ENCODE measurements at regions of chr14 and their contacts with region 1.

Region 1: GRCh38 chr14:75487155-75487671 is 35.1 kb upstream of the BATF start:
- DNase-seq: peak in 3 of 9 experiments; percentile 45 to 64 (median 47)
- ATAC-seq: peak; percentile 70
- H3K4me3 ChIP-seq: no peak overlapping the region
- H3K4me3 Mint-ChIP-seq: no peak overlapping the region
- H3K27ac ChIP-seq: no peak overlapping the region
- H3K27ac Mint-ChIP-seq: peak overlapping the region; percentile 15
- H3K4me1 ChIP-seq: peaks cover 4% of the 10 kb centered on the region
- H3K4me1 Mint-ChIP-seq: peaks cover 11% of the 10 kb centered on the region
- H3K27me3 ChIP-seq: no peaks in the 10 kb centered on the region
- H3K27me3 Mint-ChIP-seq: no peaks in the 10 kb centered on the region
- CTCF ChIP-seq: no peak

Region 2: GRCh38 chr14:75132382-75133086 is 354.7 kb before region 1 on chr14:
- CTCF ChIA-PET with region 1: interaction called, 9 read pairs
- POLR2A ChIA-PET with region 1: no interaction called
- intact Hi-C with region 1: loop called (anchors 1 to 2 kb)
- DNase-seq: peak in 6 of 9 experiments; percentile 28 to 86 (median 54)
- ATAC-seq: peak; percentile 91
- H3K4me3 ChIP-seq: no peak overlapping the region
- H3K4me3 Mint-ChIP-seq: no peak overlapping the region
- H3K27ac ChIP-seq: no peak overlapping the region
- H3K27ac Mint-ChIP-seq: peak overlapping the region; percentile 12
- H3K4me1 ChIP-seq: peaks cover 3% of the 10 kb centered on the region
- H3K4me1 Mint-ChIP-seq: peaks cover 18% of the 10 kb centered on the region
- H3K27me3 ChIP-seq: no peaks in the 10 kb centered on the region
- H3K27me3 Mint-ChIP-seq: no peaks in the 10 kb centered on the region
- CTCF ChIP-seq: peak; percentile 79

Region 3: DNA sequence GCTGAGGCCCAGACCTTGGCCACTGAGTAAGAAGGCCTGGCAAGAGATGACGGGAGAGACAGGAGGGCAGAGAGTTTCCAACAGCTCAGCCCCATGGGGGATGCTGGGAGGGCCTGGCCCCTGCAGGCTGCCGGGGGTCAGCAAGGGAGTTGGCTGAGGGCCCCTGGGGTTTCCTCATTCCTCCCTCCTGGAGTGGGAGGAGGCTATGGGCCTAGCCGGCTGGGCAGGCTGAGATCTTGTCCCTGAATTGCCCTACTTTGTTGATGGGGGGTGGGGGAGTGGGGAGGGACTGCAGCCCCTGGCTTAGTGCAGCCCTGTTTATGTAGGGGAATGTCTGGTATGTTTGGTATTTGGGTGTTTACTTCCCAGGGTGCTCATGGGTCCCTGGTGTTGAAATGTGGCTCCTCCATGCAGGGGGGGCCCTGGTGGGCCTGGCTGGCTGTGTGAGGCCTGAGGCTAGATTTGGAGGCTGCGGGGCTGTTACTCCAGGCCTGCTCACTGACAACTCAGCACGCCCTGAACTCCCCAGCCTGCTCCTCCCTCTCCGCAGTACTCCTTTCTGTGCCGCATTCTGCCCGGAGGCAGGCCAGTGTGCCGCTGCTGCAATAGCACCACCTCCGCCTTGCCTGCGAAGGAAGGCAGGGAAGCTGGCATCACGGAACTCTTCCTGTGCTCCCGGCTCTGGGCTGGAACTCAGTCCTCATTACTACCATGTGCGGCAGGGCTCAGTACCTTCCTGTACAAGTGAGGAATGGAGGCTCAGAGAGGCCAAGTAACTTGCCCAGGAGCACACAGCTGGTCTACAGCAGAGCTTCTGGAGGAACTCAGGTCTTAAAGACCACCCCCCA is 34.1 kb before region 1 on chr14:
- CTCF ChIA-PET with region 1: interaction called, 12 read pairs
- POLR2A ChIA-PET with region 1: no interaction called
- intact Hi-C with region 1: no loop called
- DNase-seq: no peak
- ATAC-seq: no peak
- H3K4me3 ChIP-seq: no peak overlapping the region
- H3K4me3 Mint-ChIP-seq: no peak overlapping the region
- H3K27ac ChIP-seq: no peak overlapping the region
- H3K27ac Mint-ChIP-seq: no peak overlapping the region
- H3K4me1 ChIP-seq: no peaks in the 10 kb centered on the region
- H3K4me1 Mint-ChIP-seq: no peaks in the 10 kb centered on the region
- H3K27me3 ChIP-seq: no peaks in the 10 kb centered on the region
- H3K27me3 Mint-ChIP-seq: peaks cover 5% of the 10 kb centered on the region
- CTCF ChIP-seq: no peak

Region 4: DNA sequence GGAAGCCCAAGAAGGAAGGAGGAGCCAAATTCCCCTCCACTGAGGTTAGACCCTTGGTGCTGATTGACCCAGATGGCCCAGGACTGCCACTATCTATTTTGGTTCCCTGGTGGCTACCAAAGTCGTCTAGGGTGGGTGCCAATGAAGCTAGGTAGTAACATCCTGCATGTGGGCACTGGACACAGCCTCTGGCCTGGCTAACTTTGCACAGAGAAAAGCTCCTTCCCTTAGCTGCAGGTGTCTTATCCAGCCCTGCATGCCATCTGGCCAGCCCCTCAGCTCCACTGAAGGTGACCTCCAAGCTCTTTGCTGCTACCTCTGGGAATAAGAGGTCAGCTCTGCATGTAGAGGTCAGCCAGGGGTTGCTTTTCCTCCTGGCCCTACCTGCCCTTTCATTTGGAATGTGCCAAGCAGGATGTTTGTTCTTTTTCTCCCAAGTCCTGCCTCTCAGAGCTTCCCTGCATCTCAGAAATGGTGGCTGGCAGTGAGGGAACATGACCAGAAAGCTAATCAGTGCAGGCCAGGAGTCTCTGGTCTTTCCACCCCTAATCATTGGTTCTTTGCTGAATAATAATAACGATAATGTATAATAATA is 25.4 kb before region 1 on chr14:
- CTCF ChIA-PET with region 1: interaction called, 12 read pairs
- POLR2A ChIA-PET with region 1: no interaction called
- intact Hi-C with region 1: no loop called
- DNase-seq: no peak
- ATAC-seq: no peak
- H3K4me3 ChIP-seq: no peak overlapping the region
- H3K4me3 Mint-ChIP-seq: no peak overlapping the region
- H3K27ac ChIP-seq: no peak overlapping the region
- H3K27ac Mint-ChIP-seq: no peak overlapping the region
- H3K4me1 ChIP-seq: no peaks in the 10 kb centered on the region
- H3K4me1 Mint-ChIP-seq: no peaks in the 10 kb centered on the region
- H3K27me3 ChIP-seq: no peaks in the 10 kb centered on the region
- H3K27me3 Mint-ChIP-seq: no peaks in the 10 kb centered on the region
- CTCF ChIP-seq: no peak

Region 5: GRCh38 chr14:75476274-75476995 is 10.8 kb before region 1 on chr14:
- CTCF ChIA-PET with region 1: interaction called, 18 read pairs
- POLR2A ChIA-PET with region 1: interaction called, 3 read pairs
- intact Hi-C with region 1: no loop called
- DNase-seq: no peak
- ATAC-seq: no peak
- H3K4me3 ChIP-seq: no peak overlapping the region
- H3K4me3 Mint-ChIP-seq: no peak overlapping the region
- H3K27ac ChIP-seq: no peak overlapping the region
- H3K27ac Mint-ChIP-seq: no peak overlapping the region
- H3K4me1 ChIP-seq: no peaks in the 10 kb centered on the region
- H3K4me1 Mint-ChIP-seq: no peaks in the 10 kb centered on the region
- H3K27me3 ChIP-seq: no peaks in the 10 kb centered on the region
- H3K27me3 Mint-ChIP-seq: no peaks in the 10 kb centered on the region
- CTCF ChIP-seq: no peak

Region 6: DNA sequence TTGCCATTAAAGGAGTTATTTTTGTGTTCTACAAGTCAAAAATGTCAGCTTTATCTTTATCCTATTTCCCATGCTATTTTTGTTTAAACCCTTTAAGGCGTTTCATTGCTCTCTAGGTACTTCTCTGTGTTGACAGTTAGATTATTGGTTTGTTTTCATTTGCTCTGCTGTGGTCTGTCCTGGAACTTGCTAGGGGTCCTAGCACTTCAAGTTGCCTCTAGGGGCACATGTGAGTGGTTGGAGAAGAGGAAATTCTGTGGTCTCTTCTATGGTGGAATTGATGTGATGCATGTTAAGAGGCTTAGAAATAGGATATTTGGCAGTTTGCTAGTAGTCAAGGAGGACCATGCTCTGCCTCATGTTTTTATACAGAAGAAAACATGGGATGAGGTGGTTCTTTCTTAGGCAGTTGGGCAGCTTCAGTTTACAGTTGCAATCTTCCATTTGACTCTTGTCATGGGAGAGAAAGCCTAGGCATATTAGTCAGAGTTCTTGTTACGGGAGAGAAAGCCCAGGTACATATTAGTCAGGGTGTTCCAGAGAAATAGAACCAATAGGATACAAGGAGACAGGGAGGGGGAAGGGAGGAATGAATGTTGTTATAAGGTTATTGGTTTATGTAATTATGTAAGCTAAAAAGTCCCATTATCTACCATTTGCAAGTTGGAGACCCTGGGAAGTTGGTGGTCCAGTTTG is 188.2 kb after region 1 on chr14:
- CTCF ChIA-PET with region 1: no interaction called
- POLR2A ChIA-PET with region 1: no interaction called
- intact Hi-C with region 1: no loop called
- DNase-seq: no peak
- ATAC-seq: no peak
- H3K4me3 ChIP-seq: no peak overlapping the region
- H3K4me3 Mint-ChIP-seq: no peak overlapping the region
- H3K27ac ChIP-seq: no peak overlapping the region
- H3K27ac Mint-ChIP-seq: no peak overlapping the region
- H3K4me1 ChIP-seq: no peaks in the 10 kb centered on the region
- H3K4me1 Mint-ChIP-seq: peaks cover 5% of the 10 kb centered on the region
- H3K27me3 ChIP-seq: no peaks in the 10 kb centered on the region
- H3K27me3 Mint-ChIP-seq: no peaks in the 10 kb centered on the region
- CTCF ChIP-seq: no peak

Region 7: GRCh38 chr14:77301103-77301502 is 1813.9 kb after region 1 on chr14:
- CTCF ChIA-PET with region 1: no interaction called
- POLR2A ChIA-PET with region 1: no interaction called
- intact Hi-C with region 1: no loop called
- DNase-seq: peak in 8 of 9 experiments; percentile 27 to 62 (median 53)
- ATAC-seq: no peak
- H3K4me3 ChIP-seq: no peak overlapping the region
- H3K4me3 Mint-ChIP-seq: no peak overlapping the region
- H3K27ac ChIP-seq: no peak overlapping the region
- H3K27ac Mint-ChIP-seq: no peak overlapping the region
- H3K4me1 ChIP-seq: no peaks in the 10 kb centered on the region
- H3K4me1 Mint-ChIP-seq: no peaks in the 10 kb centered on the region
- H3K27me3 ChIP-seq: no peaks in the 10 kb centered on the region
- H3K27me3 Mint-ChIP-seq: no peaks in the 10 kb centered on the region
- CTCF ChIP-seq: peak; percentile 46